Ascending aorta (tissue), 2 donors: ENCODE measurements at regions of chr14 and their contacts with region 1.

Region 1: DNA sequence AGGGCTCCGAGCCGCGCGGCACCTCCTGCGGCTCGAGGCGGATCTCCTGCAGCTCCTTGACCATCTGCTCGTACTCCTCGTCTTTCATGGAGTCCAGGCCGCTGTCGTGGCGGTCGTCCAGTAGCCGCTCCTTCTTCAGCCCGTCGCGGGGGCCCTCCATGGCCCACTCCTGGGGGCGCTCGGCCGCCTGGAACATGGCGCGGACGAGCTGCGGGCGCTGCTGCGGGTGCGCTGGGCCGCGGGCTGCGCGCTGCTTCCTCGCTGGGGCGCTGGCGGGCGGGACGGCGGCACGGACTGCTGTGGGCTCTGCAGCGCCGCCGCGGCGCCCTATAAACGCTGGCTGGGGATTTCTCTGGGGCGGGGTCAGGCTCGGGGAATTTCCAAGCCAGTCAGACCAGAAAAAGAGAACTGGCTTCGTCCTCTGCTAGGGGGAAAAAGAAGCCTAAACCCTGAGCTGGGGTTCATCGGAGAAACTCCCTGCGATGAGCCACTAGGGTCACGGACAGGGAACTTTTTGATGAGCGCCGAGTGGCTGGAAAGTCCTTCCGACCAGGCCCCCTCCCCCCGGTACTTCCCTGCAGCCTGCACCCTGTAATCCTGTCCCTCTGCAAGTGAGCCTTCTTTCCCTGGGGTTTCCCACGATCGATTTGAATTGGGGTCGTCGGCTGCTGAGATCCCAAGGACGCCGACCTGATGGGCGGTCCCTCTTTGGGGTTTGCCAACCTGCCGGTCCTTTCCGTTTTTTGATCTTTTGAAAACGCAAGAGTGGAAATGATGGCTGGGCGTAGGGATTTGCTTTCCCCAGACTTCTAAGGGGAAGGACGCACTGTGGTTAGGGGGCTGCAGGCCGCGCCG is at the start of gene NFKBIA:
- DNase-seq: peak; percentile 51 to 95
- H3K4me3 ChIP-seq: peak within 1 kb of the TSS; percentile 80 to 94
- H3K27ac ChIP-seq: peak within 1 kb of the TSS; percentile 99
- H3K4me1 ChIP-seq: peaks cover 18 to 31% of the 10 kb centered on the region in 2 donors
- H3K27me3 ChIP-seq: no peaks in the 10 kb centered on the region
- CTCF ChIP-seq: peak in 1 of 3 experiments; percentile 10
- total RNA-seq, gene NFKBIA: 944 TPM

Region 2: GRCh38 chr14:34539407-34540180 is 865.1 kb before region 1 on chr14 and contains the start of gene EAPP:
- intact Hi-C with region 1: loop called (anchors 10 kb)
- DNase-seq: peak; percentile 96 to 99
- H3K4me3 ChIP-seq: peak within 1 kb of the TSS; percentile 75 to 86
- H3K27ac ChIP-seq: peak within 1 kb of the TSS; percentile 92
- H3K4me1 ChIP-seq: peaks cover 2 to 3% of the 10 kb centered on the region in 2 donors
- H3K27me3 ChIP-seq: no peaks in the 10 kb centered on the region
- CTCF ChIP-seq: no peak
- total RNA-seq, gene EAPP: 10.1 TPM

Region 3: GRCh38 chr14:35046048-35046741 is 358.5 kb before region 1 on chr14 and contains the start of gene FAM177A1:
- intact Hi-C with region 1: loop called (anchors 5 kb)
- DNase-seq: peak; percentile 97 to 100
- H3K4me3 ChIP-seq: peak within 1 kb of the TSS; percentile 81 to 89
- H3K27ac ChIP-seq: peak within 1 kb of the TSS; percentile 99
- H3K4me1 ChIP-seq: peaks cover 0 to 14% of the 10 kb centered on the region in 2 donors
- H3K27me3 ChIP-seq: no peaks in the 10 kb centered on the region
- CTCF ChIP-seq: no peak
- total RNA-seq, gene FAM177A1: 35.1 TPM

Region 4: DNA sequence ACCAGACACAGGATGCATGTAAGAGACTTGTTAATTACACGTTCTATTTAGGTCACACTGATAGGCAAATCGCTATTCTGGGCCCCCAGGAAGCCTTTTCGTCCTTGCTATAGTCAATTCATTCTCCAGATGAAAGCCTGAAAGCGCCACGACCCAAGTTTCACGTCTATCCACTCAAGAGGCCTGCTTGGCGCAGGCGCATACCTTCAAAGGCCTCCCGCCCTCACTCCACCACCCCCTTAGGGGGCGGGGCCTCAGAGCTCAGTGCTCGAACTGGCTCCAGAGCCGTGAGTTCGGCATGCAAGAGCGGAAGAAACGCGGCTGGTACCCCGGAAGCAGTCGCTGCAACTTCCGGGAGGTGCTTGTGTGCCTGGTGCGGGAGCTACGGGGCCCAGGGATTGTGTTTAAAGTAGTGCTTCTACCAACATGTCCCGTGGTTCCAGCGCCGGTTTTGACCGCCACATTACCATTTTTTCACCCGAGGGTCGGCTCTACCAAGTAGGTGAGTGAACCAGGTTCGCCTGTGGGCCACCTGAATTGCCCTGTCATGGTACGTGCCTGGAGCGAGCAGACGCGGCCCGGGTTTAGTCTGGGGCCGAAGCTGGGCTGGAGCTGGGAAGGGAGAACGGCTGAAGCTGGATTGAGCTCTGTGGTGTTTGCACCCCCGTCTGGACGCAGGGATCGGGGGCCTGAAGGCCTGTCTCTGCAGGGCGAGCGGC is 112.5 kb before region 1 on chr14 and contains the start of gene PSMA6:
- intact Hi-C with region 1: loop called (anchors 1 kb)
- DNase-seq: peak; percentile 96 to 99
- H3K4me3 ChIP-seq: peak within 1 kb of the TSS; percentile 80 to 87
- H3K27ac ChIP-seq: peak within 1 kb of the TSS; percentile 83 to 92
- H3K4me1 ChIP-seq: peaks cover 0 to 22% of the 10 kb centered on the region in 2 donors
- H3K27me3 ChIP-seq: no peaks in the 10 kb centered on the region
- CTCF ChIP-seq: no peak
- total RNA-seq, gene PSMA6: 96.6 TPM

Region 5: DNA sequence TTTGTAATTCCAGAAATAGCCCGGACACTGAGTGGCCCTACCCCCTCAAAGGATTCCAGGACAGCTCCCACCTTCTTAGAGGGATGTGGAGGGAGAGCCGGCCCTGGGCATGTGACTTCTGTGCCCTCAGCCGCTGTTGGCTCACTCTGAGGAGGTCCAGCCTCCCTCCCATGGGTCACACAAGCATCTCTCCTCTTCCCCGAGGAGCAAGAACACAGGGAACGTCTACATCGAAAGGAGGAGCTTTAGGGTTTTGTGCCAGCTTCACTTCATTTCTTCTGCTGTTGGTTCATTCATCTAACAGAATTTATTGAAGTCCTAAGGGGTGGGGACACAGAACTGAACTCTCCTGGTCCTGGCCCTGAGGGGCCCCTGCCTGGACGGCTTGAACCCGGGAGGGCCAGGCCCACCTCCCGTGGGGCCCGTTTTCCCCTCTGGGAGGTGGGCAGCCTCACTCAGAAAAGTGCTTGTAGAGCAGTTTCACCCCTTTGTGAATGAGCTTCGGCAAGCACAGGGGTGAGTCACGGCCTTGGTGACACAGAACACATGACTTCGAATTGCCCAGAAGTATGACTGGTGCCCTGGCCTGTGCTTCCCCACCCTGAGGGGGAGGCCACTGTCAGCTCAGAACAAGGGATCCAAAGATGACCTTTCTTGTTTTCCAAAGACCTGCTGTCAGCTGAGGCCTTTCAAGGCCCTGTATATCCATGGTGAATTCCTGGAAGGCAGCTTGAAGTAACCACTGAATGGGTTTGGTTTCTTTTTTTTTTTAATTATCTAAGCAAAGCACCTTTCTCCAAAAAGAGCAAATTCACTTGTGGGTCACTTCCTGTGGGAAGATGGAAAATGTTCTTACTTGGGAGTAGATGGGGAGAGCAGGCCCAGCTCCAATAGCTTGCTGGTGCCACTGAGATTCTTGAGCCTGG is 39.3 kb before region 1 on chr14:
- intact Hi-C with region 1: loop called (anchors 2 kb)
- DNase-seq: peak; percentile 87 to 95
- H3K4me3 ChIP-seq: no peak overlapping the region
- H3K27ac ChIP-seq: peak overlapping the region; percentile 89 to 94
- H3K4me1 ChIP-seq: peaks cover 14 to 21% of the 10 kb centered on the region in 2 donors
- H3K27me3 ChIP-seq: no peaks in the 10 kb centered on the region
- CTCF ChIP-seq: no peak

Region 6: DNA sequence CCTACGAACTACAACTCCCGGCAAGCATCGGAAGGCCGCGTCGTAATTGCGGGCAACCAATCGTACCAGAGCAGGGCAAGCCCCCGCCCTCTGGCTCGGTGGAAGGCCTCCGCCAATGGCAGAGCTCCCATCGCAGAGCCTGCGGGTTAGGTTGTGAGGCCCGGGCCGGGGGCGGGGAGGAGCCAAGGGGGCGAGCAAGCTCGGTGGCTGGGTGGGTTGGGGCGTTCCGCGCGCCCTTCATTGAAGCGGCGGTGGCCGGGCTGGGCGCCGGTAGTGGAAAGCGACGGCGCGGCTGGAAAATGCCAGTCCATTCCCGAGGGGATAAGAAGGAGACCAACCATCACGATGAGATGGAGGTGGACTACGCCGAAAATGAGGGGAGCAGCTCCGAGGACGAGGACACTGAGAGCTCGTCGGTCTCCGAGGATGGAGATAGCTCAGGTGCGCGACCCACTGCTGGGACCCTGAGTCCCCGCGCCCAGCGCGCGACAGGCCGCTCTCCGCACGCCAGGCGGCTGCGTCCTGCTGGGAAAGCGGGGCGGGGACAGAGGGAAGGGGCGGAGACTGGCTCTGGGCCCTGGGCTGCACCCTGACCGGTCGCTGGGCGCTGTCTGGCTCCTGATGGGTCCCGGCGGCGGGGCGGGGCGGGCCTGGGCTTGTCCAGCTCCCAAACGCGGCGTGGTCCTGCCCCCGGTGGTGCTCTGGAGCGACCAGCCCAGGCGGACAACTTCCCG is 421.7 kb after region 1 on chr14 and contains the start of gene BRMS1L:
- intact Hi-C with region 1: loop called (anchors 10 kb)
- DNase-seq: peak; percentile 96 to 99
- H3K4me3 ChIP-seq: peak within 1 kb of the TSS; percentile 90 to 92
- H3K27ac ChIP-seq: peak within 1 kb of the TSS; percentile 98 to 99
- H3K4me1 ChIP-seq: peaks cover 0 to 4% of the 10 kb centered on the region in 2 donors
- H3K27me3 ChIP-seq: no peaks in the 10 kb centered on the region
- CTCF ChIP-seq: no peak
- total RNA-seq, gene BRMS1L: 7.7 TPM